ENCODE measurements at regions of chr14 and their contacts with region 1.

Region 1: DNA sequence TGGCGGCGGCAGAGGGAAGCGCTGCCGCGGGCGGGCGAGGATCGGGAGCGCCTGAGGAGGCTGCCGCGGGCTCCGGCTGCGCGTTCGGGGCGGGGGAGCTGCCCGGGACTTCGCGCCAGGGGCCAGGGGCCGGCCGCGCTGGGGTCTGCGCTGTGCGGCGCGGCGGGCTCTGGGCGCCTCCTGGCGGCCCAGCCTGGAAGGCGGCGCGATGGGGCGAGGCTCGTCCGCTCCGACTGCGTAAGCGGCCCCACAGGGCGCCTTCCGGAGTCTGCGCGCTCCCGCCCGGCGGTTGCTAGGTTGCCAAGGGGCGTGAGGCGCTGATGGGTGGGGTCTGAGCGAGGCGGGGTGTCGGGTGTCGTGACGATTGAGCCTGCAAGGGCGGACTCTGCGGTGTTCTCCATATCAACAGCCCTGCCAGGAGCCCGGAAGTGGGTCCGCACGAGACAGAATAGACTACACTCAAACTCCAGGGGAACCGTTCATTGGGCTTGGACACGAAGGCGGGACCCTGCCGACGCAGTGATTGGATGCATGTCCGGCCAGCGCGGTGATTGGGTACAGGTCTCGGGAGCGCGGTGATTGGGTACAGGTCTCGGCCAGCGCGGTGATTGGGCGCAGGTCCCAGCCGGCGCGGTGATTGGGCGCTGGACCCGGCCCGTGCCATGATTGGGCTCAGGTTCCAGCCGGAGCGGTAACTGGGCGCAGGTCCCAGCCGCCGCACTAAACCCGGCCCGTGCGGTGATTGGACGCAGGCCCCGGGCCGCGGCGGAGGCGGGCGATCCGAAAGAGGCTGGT is at the start of gene TEDC1:
- DNase-seq: peak; percentile 100
- H3K4me3 ChIP-seq: peak within 1 kb of the TSS; percentile 67 to 77 (median 70)
- H3K27ac ChIP-seq: peak within 1 kb of the TSS; percentile 90
- H3K4me1 ChIP-seq: peaks cover 27% of the 10 kb centered on the region
- H3K27me3 ChIP-seq: no peaks in the 10 kb centered on the region
- CTCF ChIP-seq: peak; percentile 51 to 65
- total RNA-seq, gene TEDC1: 3.5 to 21.3 TPM

Region 2: DNA sequence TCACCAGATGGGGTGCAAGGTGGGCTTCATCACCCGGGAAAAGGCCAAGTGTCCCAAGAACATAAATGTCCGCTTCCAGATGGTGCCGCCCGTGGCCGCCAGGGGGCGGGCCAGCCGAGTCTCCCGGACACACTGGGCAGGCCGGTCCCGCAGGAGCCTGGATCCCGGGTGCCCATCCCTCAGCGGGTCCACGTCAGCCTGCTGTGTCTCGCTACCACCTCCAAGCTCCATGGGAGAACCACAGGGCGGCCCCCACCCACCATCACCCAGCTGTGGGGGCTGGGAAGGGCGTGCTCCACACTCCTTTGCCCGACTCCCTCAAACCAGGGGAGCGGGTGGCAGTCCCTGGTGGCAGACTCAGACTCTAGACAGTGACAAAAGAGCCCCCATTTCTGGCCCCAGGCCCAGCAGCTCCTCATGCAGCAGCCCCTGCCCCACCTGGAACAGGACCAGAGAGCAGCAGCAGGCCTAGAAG is 287.7 kb before region 1 on chr14:
- CTCF ChIA-PET with region 1: no interaction called
- dilution Hi-C with region 1: no loop called
- in situ Hi-C with region 1: no loop called
- intact Hi-C with region 1: loop called (anchors 1 kb)
- DNase-seq: peak; percentile 28
- H3K4me3 ChIP-seq: no peak overlapping the region
- H3K27ac ChIP-seq: no peak overlapping the region
- H3K4me1 ChIP-seq: peaks cover 22% of the 10 kb centered on the region
- H3K27me3 ChIP-seq: no peaks in the 10 kb centered on the region
- CTCF ChIP-seq: peak; percentile 81 to 90

Region 3: DNA sequence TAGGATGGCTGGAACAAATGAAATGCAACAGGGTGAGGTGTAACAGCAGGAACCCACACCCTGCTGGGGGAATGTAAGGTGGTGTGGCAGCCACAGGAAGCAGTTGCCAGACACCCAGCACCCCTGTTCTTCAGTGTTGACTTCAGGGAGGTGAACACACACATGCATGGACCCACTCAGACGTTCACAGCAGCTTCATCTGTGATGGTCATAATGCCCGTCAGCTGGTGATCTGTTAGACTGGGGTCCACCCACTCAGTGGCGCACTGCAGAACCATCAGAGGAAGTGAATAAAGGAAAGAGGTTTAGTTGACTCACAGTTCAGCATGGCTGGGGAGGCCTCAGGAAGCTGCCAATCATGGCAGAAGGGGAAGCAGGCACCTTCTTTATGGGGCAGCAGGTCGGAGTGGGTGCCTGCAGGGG is 115.1 kb before region 1 on chr14:
- CTCF ChIA-PET with region 1: no interaction called
- dilution Hi-C with region 1: no loop called
- in situ Hi-C with region 1: no loop called
- intact Hi-C with region 1: loop called (anchors 1 kb)
- DNase-seq: no peak
- H3K4me3 ChIP-seq: no peak overlapping the region
- H3K27ac ChIP-seq: no peak overlapping the region
- H3K4me1 ChIP-seq: peaks cover 3% of the 10 kb centered on the region
- H3K27me3 ChIP-seq: no peaks in the 10 kb centered on the region
- CTCF ChIP-seq: no peak

Region 4: DNA sequence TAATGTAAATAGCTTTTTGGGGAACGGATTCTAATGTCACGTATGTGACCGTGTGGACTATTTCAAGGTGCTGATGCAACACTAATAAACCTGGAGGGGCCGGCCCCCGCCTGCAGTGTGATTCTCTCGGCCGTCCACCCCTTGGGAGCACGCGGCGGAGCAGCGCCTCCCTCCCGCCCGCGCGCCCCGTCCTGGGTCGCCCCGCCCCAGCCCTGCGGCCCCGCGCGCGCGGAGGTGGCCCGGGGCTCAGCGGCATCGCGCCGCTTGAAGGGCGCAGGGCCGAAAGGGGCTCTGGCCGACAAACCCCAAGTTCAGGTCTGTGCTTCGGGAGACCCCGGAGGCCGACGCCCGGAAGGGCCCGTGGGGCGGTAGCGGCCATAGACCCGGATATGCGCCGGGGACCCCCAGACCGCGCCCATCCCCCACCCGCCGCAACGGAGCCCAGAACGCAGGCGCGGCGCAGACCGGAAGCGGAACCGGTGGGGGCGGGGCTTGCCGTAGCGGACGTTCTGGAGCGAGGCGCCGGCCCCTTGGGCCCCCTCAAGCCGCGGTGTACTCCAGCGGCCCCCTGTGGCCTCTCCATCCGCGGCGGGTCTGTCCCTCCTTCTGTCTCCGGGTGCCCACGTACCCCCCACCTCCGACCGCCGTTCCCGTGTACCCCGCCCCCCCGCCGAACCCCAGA is 92.6 kb before region 1 on chr14 and contains the start of gene TEX22:
- CTCF ChIA-PET with region 1: interaction called, 4 read pairs
- dilution Hi-C with region 1: no loop called
- in situ Hi-C with region 1: no loop called
- intact Hi-C with region 1: loop called (anchors 1 kb)
- DNase-seq: peak; percentile 26
- H3K4me3 ChIP-seq: peak within 1 kb of the TSS; percentile 69 to 83 (median 70)
- H3K27ac ChIP-seq: peak within 1 kb of the TSS; percentile 8
- H3K4me1 ChIP-seq: peaks cover 12% of the 10 kb centered on the region
- H3K27me3 ChIP-seq: no peaks in the 10 kb centered on the region
- CTCF ChIP-seq: no peak
- total RNA-seq, gene TEX22: 0.17 to 2.3 TPM

Region 5: GRCh38 chr14:105430535-105430934 is 60.2 kb before region 1 on chr14:
- CTCF ChIA-PET with region 1: no interaction called
- dilution Hi-C with region 1: no loop called
- in situ Hi-C with region 1: no loop called
- intact Hi-C with region 1: loop called (anchors 5 kb)
- DNase-seq: peak; percentile 69
- H3K4me3 ChIP-seq: no peak overlapping the region
- H3K27ac ChIP-seq: peak overlapping the region; percentile 27
- H3K4me1 ChIP-seq: peaks cover 13% of the 10 kb centered on the region
- H3K27me3 ChIP-seq: no peaks in the 10 kb centered on the region
- CTCF ChIP-seq: no peak

Region 6: GRCh38 chr14:105448706-105449111 is 42.1 kb before region 1 on chr14:
- CTCF ChIA-PET with region 1: interaction called, 4 read pairs
- dilution Hi-C with region 1: no loop called
- in situ Hi-C with region 1: no loop called
- intact Hi-C with region 1: loop called (anchors 1 kb)
- DNase-seq: peak; percentile 14
- H3K4me3 ChIP-seq: no peak overlapping the region
- H3K27ac ChIP-seq: no peak overlapping the region
- H3K4me1 ChIP-seq: no peaks in the 10 kb centered on the region
- H3K27me3 ChIP-seq: no peaks in the 10 kb centered on the region
- CTCF ChIP-seq: peak; percentile 56 to 83

Region 7: DNA sequence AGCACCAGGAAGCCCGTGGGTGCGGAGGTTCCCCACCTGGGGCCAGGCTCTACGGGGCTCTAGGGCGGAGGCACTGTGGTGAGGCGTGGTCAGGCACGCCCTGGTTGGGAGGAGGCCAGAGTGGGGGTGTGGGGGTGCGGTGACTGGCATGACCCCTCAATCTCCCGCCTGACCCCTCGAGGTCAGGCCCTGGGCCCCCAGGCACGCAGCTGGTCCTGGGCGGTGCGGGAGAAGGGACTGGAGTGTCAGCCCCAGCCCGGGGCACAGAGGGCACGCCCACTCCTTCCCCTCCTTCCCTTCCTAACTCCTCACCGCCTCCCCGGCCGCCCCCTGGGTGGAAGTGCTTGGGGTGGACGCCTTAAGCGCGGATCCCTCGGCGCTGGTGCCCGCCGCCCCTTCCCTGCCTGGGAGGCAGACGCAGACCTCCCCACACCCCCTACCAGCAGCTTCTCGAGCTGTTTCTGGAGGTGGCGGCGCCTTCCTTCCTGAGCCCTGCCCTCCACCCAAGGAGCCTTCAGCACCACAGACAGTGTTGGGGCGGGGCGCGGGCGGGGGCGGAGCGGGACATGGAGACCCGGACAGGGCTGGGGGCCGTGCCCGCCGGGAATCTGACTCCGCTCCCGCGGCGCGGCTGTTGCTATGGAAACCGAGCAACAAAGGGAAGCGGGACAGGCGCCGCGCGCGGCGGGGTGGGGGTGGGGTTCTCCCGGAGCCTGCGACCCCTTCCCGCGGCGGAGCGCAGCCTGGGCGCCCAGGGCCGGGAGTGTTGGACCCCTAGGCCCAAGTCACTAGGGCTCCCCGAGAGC is 16.9 kb before region 1 on chr14:
- CTCF ChIA-PET with region 1: no interaction called
- dilution Hi-C with region 1: no loop called
- in situ Hi-C with region 1: no loop called
- intact Hi-C with region 1: loop called (anchors 2 kb)
- DNase-seq: peak; percentile 78
- H3K4me3 ChIP-seq: peak overlapping the region; percentile 40 to 79 (median 74)
- H3K27ac ChIP-seq: peak overlapping the region; percentile 83
- H3K4me1 ChIP-seq: peaks cover 40% of the 10 kb centered on the region
- H3K27me3 ChIP-seq: no peaks in the 10 kb centered on the region
- CTCF ChIP-seq: no peak

Region 8: GRCh38 chr14:105640936-105641843 is 150.4 kb after region 1 on chr14:
- CTCF ChIA-PET with region 1: no interaction called
- dilution Hi-C with region 1: no loop called
- in situ Hi-C with region 1: no loop called
- intact Hi-C with region 1: no loop called
- DNase-seq: no peak
- H3K4me3 ChIP-seq: no peak overlapping the region
- H3K27ac ChIP-seq: no peak overlapping the region
- H3K4me1 ChIP-seq: no peaks in the 10 kb centered on the region
- H3K27me3 ChIP-seq: no peaks in the 10 kb centered on the region
- CTCF ChIP-seq: no peak